CD14-positive monocyte (primary cell): ENCODE measurements at regions of chr1 and their contacts with region 1.

Region 1: GRCh38 chr1:223133824-223134435 is 9.1 kb downstream of the TLR5 start:
- DNase-seq: peak; percentile 75 to 85 (median 77)
- H3K4me3 ChIP-seq: peak overlapping the region; percentile 34 to 78 (median 71)
- H3K4me3 Mint-ChIP-seq: peak overlapping the region; percentile 81 to 91
- H3K27ac ChIP-seq: peak overlapping the region; percentile 22 to 67
- H3K27ac Mint-ChIP-seq: peak overlapping the region; percentile 59 to 92 (median 85)
- H3K4me1 ChIP-seq: peaks cover 60 to 69% of the 10 kb centered on the region in 2 donors
- H3K4me1 Mint-ChIP-seq: peaks cover 76% of the 10 kb centered on the region
- H3K27me3 ChIP-seq: no peaks in the 10 kb centered on the region
- H3K27me3 Mint-ChIP-seq: peaks cover 0 to 4% (median 1%) of the 10 kb centered on the region in 3 donors
- CTCF ChIP-seq: peak; percentile 68

Region 2: GRCh38 chr1:222465211-222466041 is 668.5 kb before region 1 on chr1:
- intact Hi-C with region 1: loop called in 1 of 2 experiments (anchors 10 kb)
- DNase-seq: peak; percentile 82 to 88 (median 85)
- H3K4me3 ChIP-seq: peak overlapping the region; percentile 49 to 76 (median 61)
- H3K4me3 Mint-ChIP-seq: peak overlapping the region; percentile 81 to 91
- H3K27ac ChIP-seq: peak overlapping the region; percentile 71 to 74
- H3K27ac Mint-ChIP-seq: peak overlapping the region; percentile 86 to 94 (median 90)
- H3K4me1 ChIP-seq: peaks cover 9 to 15% of the 10 kb centered on the region in 2 donors
- H3K4me1 Mint-ChIP-seq: peaks cover 14% of the 10 kb centered on the region
- H3K27me3 ChIP-seq: no peaks in the 10 kb centered on the region
- H3K27me3 Mint-ChIP-seq: peaks cover 0 to 11% (median 1%) of the 10 kb centered on the region in 3 donors
- CTCF ChIP-seq: peak; percentile 100

Region 3: DNA sequence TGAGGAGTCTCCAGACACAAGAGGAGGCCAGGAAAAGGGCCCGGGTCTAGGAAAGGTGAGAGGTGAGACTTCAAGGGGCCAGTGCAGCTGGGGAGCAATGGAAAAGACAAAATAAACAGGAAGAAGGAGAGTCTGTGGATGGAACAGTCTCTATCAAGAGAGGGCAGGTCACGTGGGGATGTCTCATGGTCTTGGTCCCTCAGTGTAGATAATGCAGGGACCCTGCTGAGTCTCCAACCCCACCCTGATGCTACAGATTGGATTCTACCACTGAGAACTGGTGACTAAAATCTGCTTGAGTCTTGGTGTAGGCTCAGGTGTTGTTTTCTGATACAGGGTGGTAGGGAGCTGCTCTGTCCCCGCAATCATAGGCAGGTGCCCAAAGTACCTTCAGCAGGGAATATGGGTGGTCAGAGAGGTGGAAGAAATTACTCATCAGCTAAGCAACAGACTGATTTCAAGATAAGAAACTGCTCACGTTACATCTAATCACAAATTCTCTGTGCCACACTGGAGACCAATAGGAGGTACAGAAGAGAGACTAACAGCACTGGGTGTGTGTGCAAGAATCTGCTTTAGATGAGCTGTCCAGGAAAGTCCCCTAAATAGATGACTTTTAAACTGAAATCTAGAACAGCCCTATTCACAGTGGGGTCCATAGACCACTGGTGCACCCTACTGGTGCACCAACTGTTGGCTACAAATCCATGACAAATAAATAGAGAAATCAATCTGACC is 110.6 kb after region 1 on chr1:
- intact Hi-C with region 1: loop called in 1 of 2 experiments (anchors 10 kb)
- DNase-seq: peak; percentile 26 to 68 (median 29)
- H3K4me3 ChIP-seq: no peak overlapping the region
- H3K4me3 Mint-ChIP-seq: no peak overlapping the region
- H3K27ac ChIP-seq: no peak overlapping the region
- H3K27ac Mint-ChIP-seq: peak overlapping the region in 1 of 7 donors; percentile 34
- H3K4me1 ChIP-seq: peaks cover 4 to 6% of the 10 kb centered on the region in 2 donors
- H3K4me1 Mint-ChIP-seq: peaks cover 18% of the 10 kb centered on the region
- H3K27me3 ChIP-seq: no peaks in the 10 kb centered on the region
- H3K27me3 Mint-ChIP-seq: peaks cover 0 to 8% (median 4%) of the 10 kb centered on the region in 3 donors
- CTCF ChIP-seq: peak; percentile 17

Region 4: DNA sequence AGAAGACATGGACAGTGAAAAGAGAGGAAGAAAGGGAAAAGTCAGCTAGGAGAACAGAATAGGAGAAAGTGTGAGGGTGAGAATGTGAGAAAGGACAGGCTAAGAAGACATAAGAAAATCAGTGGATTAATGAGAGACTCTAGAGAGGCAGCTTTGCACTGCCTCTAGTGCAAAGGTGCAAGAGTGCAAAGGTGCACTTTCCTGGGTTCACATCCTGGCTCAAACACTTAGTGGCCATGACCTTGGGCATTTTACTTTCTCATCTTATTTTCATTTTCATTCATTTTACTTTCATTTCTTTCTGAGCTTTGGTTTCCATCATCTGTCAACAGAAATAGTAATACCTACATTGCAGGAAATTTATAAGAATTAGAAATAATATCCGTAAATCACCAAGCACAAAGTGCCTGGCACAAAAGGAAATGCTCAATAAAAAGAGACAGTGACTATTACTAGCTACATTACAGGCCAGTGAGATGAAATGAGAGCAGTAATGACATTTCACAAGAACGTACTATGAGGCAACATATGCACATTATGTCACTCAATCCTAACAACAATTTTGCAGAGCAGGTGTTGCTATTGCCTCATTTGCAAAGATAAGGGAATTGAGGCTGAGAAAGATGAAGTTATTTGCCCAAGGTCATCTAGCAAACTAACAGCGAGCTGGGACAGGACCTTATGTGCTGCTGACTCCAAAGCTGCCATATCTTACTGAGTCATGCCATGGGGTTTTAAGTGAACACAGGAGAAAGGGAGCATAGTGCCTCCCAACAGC is 116.1 kb after region 1 on chr1:
- intact Hi-C with region 1: loop called (anchors 5 to 10 kb)
- DNase-seq: peak; percentile 25 to 46 (median 46)
- H3K4me3 ChIP-seq: no peak overlapping the region
- H3K4me3 Mint-ChIP-seq: peak overlapping the region in 1 of 2 donors; percentile 46
- H3K27ac ChIP-seq: peak overlapping the region in 1 of 2 donors; percentile 17
- H3K27ac Mint-ChIP-seq: peak overlapping the region in 5 of 7 donors; percentile 4 to 25 (median 16)
- H3K4me1 ChIP-seq: peaks cover 17 to 18% of the 10 kb centered on the region in 2 donors
- H3K4me1 Mint-ChIP-seq: peaks cover 24% of the 10 kb centered on the region
- H3K27me3 ChIP-seq: no peaks in the 10 kb centered on the region
- H3K27me3 Mint-ChIP-seq: peaks cover 0 to 12% (median 6%) of the 10 kb centered on the region in 3 donors
- CTCF ChIP-seq: no peak

Region 5: GRCh38 chr1:223363856-223364684 is 230.1 kb after region 1 on chr1 and contains the start of gene SUSD4:
- intact Hi-C with region 1: loop called in 1 of 2 experiments (anchors 10 kb)
- DNase-seq: no peak
- H3K4me3 ChIP-seq: peak within 1 kb of the TSS; percentile 20 to 70 (median 30)
- H3K4me3 Mint-ChIP-seq: peak within 1 kb of the TSS; percentile 78 to 90
- H3K27ac ChIP-seq: no peak within 1 kb of the TSS
- H3K27ac Mint-ChIP-seq: no peak within 1 kb of the TSS
- H3K4me1 ChIP-seq: peaks cover 15 to 19% of the 10 kb centered on the region in 2 donors
- H3K4me1 Mint-ChIP-seq: peaks cover 17% of the 10 kb centered on the region
- H3K27me3 ChIP-seq: peaks cover 61 to 67% of the 10 kb centered on the region in 2 donors
- H3K27me3 Mint-ChIP-seq: peaks cover 64 to 70% (median 64%) of the 10 kb centered on the region in 3 donors
- CTCF ChIP-seq: no peak
- polyA plus RNA-seq, gene SUSD4: 0.34 to 0.92 (median 0.50) TPM

Region 6: DNA sequence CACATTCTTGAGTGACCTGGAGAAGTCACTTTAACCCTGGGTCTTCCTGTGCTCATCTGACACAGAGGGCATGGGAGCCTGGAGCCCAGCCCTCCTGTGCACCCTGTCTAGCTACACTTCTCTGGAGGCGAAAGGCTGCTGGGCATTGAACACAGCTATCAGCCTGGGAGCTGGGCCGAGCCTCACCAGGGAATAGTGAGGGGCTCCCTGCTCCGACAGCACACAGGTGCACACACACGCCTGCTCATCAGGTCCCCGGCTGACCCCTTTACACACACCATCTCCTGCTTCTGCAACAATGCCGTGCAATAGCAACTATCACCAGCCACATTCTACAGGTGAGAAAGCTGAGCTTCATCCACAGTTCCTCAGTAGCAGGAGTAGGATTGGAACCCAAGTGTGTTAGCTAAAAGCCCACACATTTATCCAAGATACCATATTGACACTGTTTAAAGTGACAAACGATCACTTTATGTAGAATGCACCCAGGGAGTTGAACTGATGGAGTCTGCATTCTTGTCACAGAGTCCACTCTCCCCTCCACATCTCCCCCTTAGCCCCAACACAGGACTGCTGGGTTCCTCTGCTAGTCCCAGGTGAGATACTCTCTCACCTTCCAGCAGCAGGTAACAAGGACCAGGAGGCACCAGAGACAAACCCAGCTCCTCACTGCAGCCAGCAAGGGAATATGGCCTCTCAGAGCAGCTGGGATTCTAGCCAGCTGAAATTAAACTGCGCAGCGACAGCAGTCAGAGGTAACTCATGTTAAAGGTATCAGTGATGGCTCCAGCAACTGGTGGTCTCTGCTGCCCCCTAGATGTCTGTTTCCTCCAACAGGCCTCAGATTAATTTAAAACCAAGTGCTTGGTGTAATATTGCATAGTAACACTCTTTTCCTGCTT is 549.9 kb after region 1 on chr1:
- intact Hi-C with region 1: loop called in 1 of 2 experiments (anchors 10 kb)
- DNase-seq: peak in 1 of 3 donors; percentile 34
- H3K4me3 ChIP-seq: no peak overlapping the region
- H3K4me3 Mint-ChIP-seq: no peak overlapping the region
- H3K27ac ChIP-seq: no peak overlapping the region
- H3K27ac Mint-ChIP-seq: no peak overlapping the region
- H3K4me1 ChIP-seq: peaks cover 7 to 11% of the 10 kb centered on the region in 2 donors
- H3K4me1 Mint-ChIP-seq: peaks cover 7% of the 10 kb centered on the region
- H3K27me3 ChIP-seq: peaks cover 0 to 3% of the 10 kb centered on the region in 2 donors
- H3K27me3 Mint-ChIP-seq: peaks cover 7 to 16% (median 10%) of the 10 kb centered on the region in 3 donors
- CTCF ChIP-seq: peak; percentile 59